ENCODE measurements at regions of chr2 and their contacts with region 1.

Region 1: GRCh38 chr2:85826990-85827878 is 61.6 kb downstream of the ST3GAL5 start:
- DNase-seq: peak; percentile 61
- H3K4me3 ChIP-seq: no peak overlapping the region
- H3K27ac ChIP-seq: no peak overlapping the region
- H3K4me1 ChIP-seq: no peaks in the 10 kb centered on the region
- H3K27me3 ChIP-seq: peaks cover 0 to 2% of the 10 kb centered on the region in 2 experiments
- CTCF ChIP-seq: peak; percentile 71 to 92
- POLR2A ChIP-seq: no peak

Region 2: DNA sequence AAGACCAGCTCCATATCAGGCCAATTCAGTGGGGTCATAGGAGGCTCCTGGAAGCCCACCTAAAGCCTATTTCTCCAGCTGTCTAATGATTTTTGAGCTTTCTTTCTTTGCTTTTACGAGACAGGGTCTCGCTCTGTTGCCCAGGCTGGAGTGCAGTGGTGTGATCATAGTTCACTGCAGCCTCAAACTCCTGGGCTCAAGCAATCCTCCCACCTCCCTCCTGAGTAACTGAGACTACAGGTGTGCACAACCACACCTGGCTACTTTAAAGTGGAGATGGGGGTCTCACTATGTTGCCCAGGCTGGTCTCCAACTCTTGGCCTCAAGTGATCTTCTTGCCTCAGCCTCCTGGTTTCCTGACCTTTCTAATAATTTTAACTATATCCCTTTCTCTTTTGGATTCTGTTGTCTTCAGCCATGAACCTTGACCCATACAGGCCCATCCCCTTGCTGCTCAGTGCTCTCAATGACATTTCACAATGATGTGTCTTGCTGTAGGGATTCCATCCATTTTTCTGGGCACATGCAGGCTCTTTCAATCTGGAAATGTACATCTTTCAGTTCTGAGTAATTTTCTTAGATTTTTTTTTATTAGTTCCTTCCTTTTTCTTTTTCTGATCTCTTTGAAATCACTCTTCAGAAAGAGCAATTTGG is 103.4 kb before region 1 on chr2:
- CTCF ChIA-PET with region 1: interaction called, 20 read pairs
- POLR2A ChIA-PET with region 1: no interaction called
- dilution Hi-C with region 1: loop called (anchors 25 kb)
- intact Hi-C with region 1: no loop called
- DNase-seq: no peak
- H3K4me3 ChIP-seq: no peak overlapping the region
- H3K27ac ChIP-seq: no peak overlapping the region
- H3K4me1 ChIP-seq: no peaks in the 10 kb centered on the region
- H3K27me3 ChIP-seq: peaks cover 0 to 8% of the 10 kb centered on the region in 2 experiments
- CTCF ChIP-seq: no peak
- POLR2A ChIP-seq: no peak

Region 3: GRCh38 chr2:85844486-85844885 is 17.3 kb after region 1 on chr2:
- CTCF ChIA-PET with region 1: interaction called, 23 read pairs
- POLR2A ChIA-PET with region 1: no interaction called
- dilution Hi-C with region 1: no loop called
- intact Hi-C with region 1: no loop called
- DNase-seq: no peak
- H3K4me3 ChIP-seq: no peak overlapping the region
- H3K27ac ChIP-seq: no peak overlapping the region
- H3K4me1 ChIP-seq: no peaks in the 10 kb centered on the region
- H3K27me3 ChIP-seq: no peaks in the 10 kb centered on the region
- CTCF ChIP-seq: no peak
- POLR2A ChIP-seq: no peak

Region 4: DNA sequence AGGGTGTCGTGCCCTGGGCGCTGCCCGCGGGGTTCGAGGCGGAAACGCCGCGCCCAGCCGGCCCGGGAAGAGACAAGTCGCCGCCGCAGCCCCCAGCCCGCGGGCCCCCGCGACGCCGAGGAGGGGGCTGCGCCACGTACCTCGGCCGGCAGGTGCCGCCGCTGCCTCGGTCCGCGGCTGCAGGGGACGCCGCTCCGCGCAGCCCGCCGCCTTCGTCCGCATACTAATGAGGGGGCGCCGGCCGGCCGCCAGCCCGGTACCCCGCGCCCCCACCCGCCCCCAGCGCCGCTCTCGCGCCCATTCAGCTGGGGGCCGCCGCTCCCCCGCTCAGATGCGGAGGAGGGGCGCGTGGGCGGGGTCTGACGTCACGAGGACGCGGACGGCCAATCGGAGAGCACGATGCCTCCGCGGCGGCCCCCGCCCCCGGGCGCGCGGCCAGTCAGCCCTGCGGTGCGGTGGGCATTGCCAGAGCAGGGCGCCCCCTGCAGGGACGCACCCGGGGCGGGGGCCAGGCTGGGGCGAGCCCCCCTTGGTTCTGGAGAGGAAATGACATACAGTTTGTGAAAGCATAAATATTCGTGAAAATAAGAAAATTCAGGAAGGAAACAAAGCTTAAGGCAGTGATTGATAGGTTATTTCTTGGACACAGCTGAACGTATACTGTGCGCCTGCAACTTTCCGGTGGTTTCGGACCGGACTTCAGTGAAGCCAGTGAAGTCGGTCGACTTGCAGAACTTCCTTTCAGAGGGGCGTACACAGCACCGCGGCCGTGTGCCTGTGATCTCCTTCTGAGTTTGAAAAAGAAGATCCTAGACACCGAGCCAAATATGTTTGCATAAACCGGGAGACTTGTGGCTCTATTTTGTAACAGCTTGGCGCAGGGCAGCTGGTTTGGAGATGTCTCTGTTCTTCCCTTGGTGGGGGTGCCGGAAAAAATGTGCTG is 61.7 kb after region 1 on chr2 and contains the start of gene ST3GAL5:
- CTCF ChIA-PET with region 1: interaction called, 194 read pairs
- POLR2A ChIA-PET with region 1: no interaction called
- dilution Hi-C with region 1: no loop called
- intact Hi-C with region 1: loop called (anchors 1 kb)
- DNase-seq: peak; percentile 97
- H3K4me3 ChIP-seq: peak within 1 kb of the TSS; percentile 55 to 80 (median 69)
- H3K27ac ChIP-seq: peak within 1 kb of the TSS; percentile 52
- H3K4me1 ChIP-seq: peaks cover 33% of the 10 kb centered on the region
- H3K27me3 ChIP-seq: no peaks in the 10 kb centered on the region
- CTCF ChIP-seq: peak; percentile 82 to 97
- POLR2A ChIP-seq: peak; percentile 40
- total RNA-seq, gene ST3GAL5: 12.7 and 16.0 TPM in 2 replicates

Region 5: DNA sequence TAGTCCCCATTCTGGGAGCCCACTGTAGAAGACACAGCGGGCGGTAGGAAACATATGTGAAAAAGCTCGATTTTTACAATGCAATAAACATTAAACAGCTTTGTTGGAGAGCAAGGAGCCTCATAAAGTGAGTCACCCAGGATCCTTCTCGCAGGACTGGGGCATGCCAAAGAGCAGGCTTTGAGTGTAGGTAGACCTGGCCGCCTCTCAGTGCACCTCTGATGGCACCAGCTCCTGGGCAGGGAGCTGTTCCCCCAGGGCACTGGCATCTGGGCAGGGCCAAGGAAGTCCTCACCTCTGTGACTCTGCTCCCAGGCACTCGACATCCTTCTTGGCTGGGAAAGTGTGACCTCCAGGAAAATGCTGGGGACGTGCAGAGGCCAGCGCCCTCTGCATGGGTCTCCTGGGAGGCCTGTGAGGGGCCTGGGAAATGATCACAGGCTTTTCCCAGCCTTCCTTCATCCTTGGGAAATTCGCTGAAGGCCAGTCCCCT is 184.3 kb after region 1 on chr2:
- CTCF ChIA-PET with region 1: interaction called, 13 read pairs
- POLR2A ChIA-PET with region 1: interaction called, 5 read pairs
- dilution Hi-C with region 1: no loop called
- intact Hi-C with region 1: no loop called
- DNase-seq: no peak
- H3K4me3 ChIP-seq: no peak overlapping the region
- H3K27ac ChIP-seq: no peak overlapping the region
- H3K4me1 ChIP-seq: no peaks in the 10 kb centered on the region
- H3K27me3 ChIP-seq: peaks cover 4 to 5% of the 10 kb centered on the region in 2 experiments
- CTCF ChIP-seq: no peak
- POLR2A ChIP-seq: no peak

Region 6: GRCh38 chr2:86042256-86043168 is 215.3 kb after region 1 on chr2:
- CTCF ChIA-PET with region 1: interaction called, 95 read pairs
- POLR2A ChIA-PET with region 1: no interaction called
- dilution Hi-C with region 1: no loop called
- intact Hi-C with region 1: no loop called
- DNase-seq: no peak
- H3K4me3 ChIP-seq: no peak overlapping the region
- H3K27ac ChIP-seq: no peak overlapping the region
- H3K4me1 ChIP-seq: peaks cover 28% of the 10 kb centered on the region
- H3K27me3 ChIP-seq: no peaks in the 10 kb centered on the region
- CTCF ChIP-seq: no peak
- POLR2A ChIP-seq: no peak

Region 7: GRCh38 chr2:86087936-86088850 is 261.0 kb after region 1 on chr2:
- CTCF ChIA-PET with region 1: interaction called, 541 read pairs
- POLR2A ChIA-PET with region 1: interaction called, 6 read pairs
- dilution Hi-C with region 1: no loop called
- intact Hi-C with region 1: no loop called
- DNase-seq: no peak
- H3K4me3 ChIP-seq: no peak overlapping the region
- H3K27ac ChIP-seq: no peak overlapping the region
- H3K4me1 ChIP-seq: no peaks in the 10 kb centered on the region
- H3K27me3 ChIP-seq: no peaks in the 10 kb centered on the region
- CTCF ChIP-seq: peak; percentile 37 to 38
- POLR2A ChIP-seq: no peak